HCT116 (cell line): ENCODE measurements at regions of chr12 and their contacts with region 1.

Region 1: GRCh38 chr12:87163122-87163521 is 866.1 kb downstream of the C12orf50 start:
- DNase-seq: no peak
- ATAC-seq: no peak
- H3K4me3 ChIP-seq: no peak overlapping the region
- H3K27ac ChIP-seq: no peak overlapping the region
- H3K4me1 ChIP-seq: no peaks in the 10 kb centered on the region
- H3K27me3 ChIP-seq: no peaks in the 10 kb centered on the region
- CTCF ChIP-seq: no peak
- POLR2A ChIP-seq: no peak
- RAD21 ChIP-seq: no peak

Region 2: DNA sequence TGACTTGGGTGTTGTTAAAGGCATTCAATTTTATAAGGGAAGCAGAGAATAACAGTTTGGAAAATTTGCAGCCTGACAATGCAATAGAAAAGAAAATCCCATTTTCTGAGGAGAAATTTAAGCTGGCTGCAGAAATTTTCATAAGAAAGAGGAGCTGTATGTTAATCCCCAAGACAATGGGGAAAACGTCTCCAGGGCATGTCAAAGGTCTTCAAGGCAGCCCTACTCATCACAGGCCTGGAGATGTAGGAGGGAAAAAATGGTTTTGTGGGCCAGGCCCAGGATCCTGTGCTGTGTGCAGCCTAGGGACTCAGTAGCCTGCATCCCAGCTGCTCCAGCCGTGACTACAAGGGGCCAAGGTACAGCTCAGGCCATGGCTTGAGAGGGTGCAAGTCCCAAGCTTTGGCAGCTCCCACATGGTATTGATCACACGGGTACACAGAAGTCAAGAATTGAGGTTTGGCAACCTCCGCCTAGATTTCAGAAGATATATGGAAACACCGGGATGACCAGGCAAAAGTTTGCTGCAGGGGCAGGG is 19.6 kb after region 1 on chr12:
- CTCF ChIA-PET with region 1: no interaction called
- POLR2A ChIA-PET with region 1: no interaction called
- RAD21 ChIA-PET with region 1: no interaction called
- intact Hi-C with region 1: loop called (anchors 1 kb)
- DNase-seq: no peak
- ATAC-seq: no peak
- H3K4me3 ChIP-seq: no peak overlapping the region
- H3K27ac ChIP-seq: no peak overlapping the region
- H3K4me1 ChIP-seq: no peaks in the 10 kb centered on the region
- H3K27me3 ChIP-seq: no peaks in the 10 kb centered on the region
- CTCF ChIP-seq: no peak
- POLR2A ChIP-seq: no peak
- RAD21 ChIP-seq: no peak

Region 3: DNA sequence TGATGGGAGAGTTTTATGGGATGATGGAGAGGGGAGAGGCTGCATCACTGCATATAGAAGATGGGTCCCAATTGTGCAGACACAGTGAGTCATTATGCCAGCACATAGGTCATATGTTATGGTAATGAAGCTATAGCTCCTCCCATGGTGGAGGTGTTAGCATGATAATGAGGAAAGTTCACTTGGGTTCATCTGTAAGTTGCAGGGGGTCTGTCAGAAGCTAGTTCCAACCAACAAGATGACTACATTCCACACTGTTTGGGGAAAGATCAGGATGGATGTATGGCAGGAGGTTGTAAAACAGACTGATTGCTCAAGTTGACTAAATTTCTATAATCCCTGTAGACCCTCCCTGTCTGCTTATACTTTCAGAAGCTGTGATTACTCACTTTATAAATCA is 304.8 kb after region 1 on chr12:
- CTCF ChIA-PET with region 1: no interaction called
- POLR2A ChIA-PET with region 1: no interaction called
- RAD21 ChIA-PET with region 1: no interaction called
- intact Hi-C with region 1: no loop called
- DNase-seq: no peak
- ATAC-seq: no peak
- H3K4me3 ChIP-seq: no peak overlapping the region
- H3K27ac ChIP-seq: no peak overlapping the region
- H3K4me1 ChIP-seq: no peaks in the 10 kb centered on the region
- H3K27me3 ChIP-seq: no peaks in the 10 kb centered on the region
- CTCF ChIP-seq: no peak
- POLR2A ChIP-seq: no peak
- RAD21 ChIP-seq: no peak